Posterior vena cava (tissue), 2 donors: ENCODE measurements at regions of chr10 and their contacts with region 1.

Region 1: DNA sequence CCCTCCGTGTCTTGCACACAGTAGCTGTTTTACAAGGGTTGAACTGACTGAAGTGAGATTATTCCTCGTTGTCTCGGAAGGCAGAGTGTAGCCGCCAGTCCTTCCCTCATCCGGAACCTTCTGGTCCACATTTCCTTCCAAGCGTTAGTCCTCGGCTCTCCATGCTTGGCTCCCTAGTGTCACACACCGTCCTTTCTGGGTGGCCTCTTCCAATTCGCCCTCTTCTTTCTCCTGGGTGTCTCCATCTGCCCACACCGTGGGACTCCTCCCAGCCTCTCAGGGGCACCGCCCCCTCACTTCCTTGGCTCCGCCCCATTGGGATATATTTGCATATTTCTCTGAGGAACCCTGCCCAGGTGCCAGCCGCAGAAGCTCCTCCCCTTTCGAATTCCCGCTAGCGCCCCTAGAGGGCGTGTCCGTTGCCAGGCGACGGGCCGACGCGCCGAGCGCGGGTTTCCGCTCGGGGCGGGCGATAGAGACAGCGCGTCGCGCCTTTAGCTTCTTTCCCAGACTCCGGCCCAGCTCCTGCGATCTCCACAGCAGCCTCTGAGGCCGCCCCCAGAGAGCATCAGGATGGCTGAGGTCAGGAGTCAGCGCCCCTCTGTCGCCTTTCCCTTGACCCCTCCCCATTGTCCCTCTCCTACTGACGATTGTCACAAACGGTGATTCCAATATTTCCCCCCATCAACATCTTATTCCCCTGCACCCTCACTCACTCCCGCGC is at the start of gene CFAP58:
- DNase-seq: peak; percentile 98
- total RNA-seq, gene CFAP58: 0.46 to 0.86 TPM

Region 2: GRCh38 chr10:104291439-104291951 is 62.0 kb before region 1 on chr10:
- intact Hi-C with region 1: loop called (anchors 5 kb)
- DNase-seq: peak; percentile 98